Dorsolateral prefrontal cortex (tissue), 120 donors: ENCODE measurements at regions of chr1 and their contacts with region 1.

Region 1: DNA sequence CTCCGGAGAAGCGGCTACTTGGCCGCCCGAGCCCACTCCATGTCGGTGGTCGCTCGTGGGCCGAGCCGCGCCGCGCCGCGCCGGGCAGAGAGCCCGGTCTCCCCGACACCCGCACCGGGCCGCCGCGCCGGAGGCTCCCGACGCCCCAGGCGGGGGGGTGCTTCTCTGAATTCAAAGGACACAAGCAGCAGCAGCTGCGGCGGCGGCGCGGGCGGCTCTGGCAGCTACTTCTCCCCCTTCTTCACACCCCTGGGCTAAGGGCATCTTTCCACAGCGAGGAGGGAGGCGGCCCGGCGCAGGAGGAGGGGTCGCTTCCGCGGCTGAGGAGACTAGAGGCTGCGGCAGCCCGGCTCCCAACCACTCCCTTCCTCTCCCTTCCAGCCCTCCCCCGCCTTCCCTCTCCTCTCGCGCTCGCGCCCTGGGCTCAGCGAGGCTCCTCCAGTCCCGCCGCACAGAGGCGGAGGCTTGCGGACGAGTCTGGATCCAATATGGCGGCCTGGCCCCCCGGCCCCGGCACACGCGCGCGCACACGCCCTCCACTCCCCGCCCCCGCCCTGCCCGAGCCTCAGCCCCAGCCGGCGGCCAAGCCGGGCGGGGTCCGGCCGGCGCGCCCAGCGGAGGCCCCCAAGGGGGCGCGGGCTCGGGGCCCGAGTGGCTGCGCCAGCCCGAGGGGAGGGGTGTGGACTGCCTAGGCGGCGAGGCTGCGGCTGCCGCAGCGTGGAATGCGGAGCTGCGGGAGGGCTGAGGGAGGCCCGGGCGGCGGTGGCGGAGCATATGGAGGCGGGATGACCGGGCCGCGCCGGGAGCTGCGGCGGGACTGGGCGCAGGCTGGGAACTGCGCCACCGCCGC is at the start of gene CDC42BPA:
- DNase-seq: peak; percentile 72 to 89 (median 84)
- H3K4me3 ChIP-seq: peak within 1 kb of the TSS; percentile 57 to 94 (median 84)
- H3K27ac ChIP-seq: peak within 1 kb of the TSS; percentile 90 to 99 (median 98)
- H3K27me3 ChIP-seq: no peaks in the 10 kb centered on the region
- CTCF ChIP-seq: peak in 3 of 56 donors; percentile 10 to 14 (median 12)
- total RNA-seq, gene CDC42BPA: 97.5 to 158 (median 125) TPM

Region 2: GRCh38 chr1:226973898-226974543 is 344.2 kb before region 1 on chr1:
- intact Hi-C with region 1: loop called in 1 of 2 experiments (anchors 10 kb)
- DNase-seq: no peak
- H3K4me3 ChIP-seq: no peak overlapping the region
- H3K27ac ChIP-seq: peak overlapping the region; percentile 74 to 99 (median 93)
- H3K27me3 ChIP-seq: no peaks in the 10 kb centered on the region
- CTCF ChIP-seq: no peak

Region 3: GRCh38 chr1:227127891-227128290 is 190.3 kb before region 1 on chr1:
- intact Hi-C with region 1: loop called in 1 of 2 experiments (anchors 10 kb)
- DNase-seq: no peak
- H3K4me3 ChIP-seq: no peak overlapping the region
- H3K27ac ChIP-seq: peak overlapping the region in 35 of 59 donors; percentile 3 to 84 (median 57)
- H3K27me3 ChIP-seq: no peaks in the 10 kb centered on the region
- CTCF ChIP-seq: no peak

Region 4: DNA sequence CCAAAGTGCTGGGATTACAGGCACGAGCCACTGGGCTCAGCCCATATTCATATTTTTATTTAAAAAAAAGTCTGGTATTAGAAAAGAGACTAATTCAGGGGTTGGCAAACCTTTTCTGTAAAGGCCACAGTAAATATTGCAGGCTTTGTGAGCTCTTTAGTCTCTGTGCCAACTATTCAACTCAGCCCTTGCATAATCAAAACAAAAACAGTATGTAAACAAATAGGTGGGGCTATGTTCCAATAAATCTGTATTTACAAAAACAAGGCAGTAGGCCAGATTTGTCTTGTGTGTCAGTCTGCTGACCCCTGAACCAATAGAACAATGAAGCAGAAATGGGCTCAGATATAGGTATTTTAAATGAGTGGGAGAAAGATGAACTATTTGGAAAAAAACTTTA is 49.3 kb before region 1 on chr1:
- intact Hi-C with region 1: loop called in 1 of 2 experiments (anchors 5 kb)
- DNase-seq: no peak
- H3K4me3 ChIP-seq: no peak overlapping the region
- H3K27ac ChIP-seq: peak overlapping the region in 48 of 59 donors; percentile 4 to 82 (median 60)
- H3K27me3 ChIP-seq: no peaks in the 10 kb centered on the region
- CTCF ChIP-seq: no peak